Activated T-helper 1 cell treated with anti-CD3 and anti-CD28 coated beads, Interleukin-12 subunit alpha, Interleukin-12 subunit beta, Interleukin-2, Interleukin-4 antibody, amounts not matched to agents 30 ng/mL and 10 ng/mL and 1 ng/mL, durations not matched to agents 14 hours and 24 hours and 36 hours (primary cell): ENCODE measurements at regions of chr1 and their contacts with region 1.

Region 1: DNA sequence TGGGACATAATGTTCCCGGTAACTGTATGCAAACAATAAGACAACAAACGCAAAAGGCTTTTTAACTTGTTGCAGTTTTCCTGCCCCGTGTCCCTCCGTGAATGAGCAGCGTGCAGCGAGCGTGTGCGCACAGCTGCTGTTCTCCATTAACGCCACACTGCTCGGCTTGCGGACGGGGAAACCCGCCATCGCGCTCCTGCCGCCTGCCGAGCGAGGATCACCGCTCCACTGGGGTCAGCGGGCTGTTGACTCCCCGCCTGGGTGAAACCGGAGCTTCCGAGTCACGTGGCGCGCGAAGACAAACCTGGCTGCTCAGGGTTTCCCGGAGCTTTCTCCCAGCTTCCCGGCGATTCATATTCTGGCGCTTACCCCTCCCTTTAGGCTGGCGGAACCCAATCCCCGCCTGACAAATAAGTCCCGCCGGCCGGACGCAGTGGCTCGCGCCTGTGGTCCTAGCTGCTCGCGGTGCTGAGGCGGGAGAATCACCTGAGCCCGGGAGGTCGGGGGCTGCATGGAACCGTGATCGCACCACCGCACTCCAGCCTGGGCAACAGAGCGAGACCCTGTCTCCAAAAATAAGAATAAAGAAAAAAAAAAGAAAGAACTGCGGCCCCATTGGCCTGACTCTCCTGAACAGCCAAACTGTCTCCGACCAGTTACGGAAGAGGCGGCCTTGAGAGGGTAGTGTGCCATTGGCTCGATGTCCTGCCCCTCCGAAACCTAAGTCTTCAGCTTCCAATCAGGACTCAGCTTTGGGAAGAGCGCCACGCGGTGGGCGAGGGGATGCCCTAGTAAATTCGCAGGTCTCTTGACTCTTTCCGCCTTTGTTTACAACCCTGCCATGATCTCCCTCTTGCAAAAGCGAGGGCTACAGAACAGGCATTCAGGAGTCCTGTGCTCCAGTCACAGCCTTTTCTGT is at the start of gene CREB3L4:
- DNase-seq: peak; percentile 80
- H3K4me3 Mint-ChIP-seq: peak within 1 kb of the TSS; percentile 97
- H3K27ac Mint-ChIP-seq: peak within 1 kb of the TSS; percentile 95
- H3K4me1 Mint-ChIP-seq: peaks cover 52% of the 10 kb centered on the region
- H3K27me3 Mint-ChIP-seq: no peaks in the 10 kb centered on the region
- total RNA-seq, gene CREB3L4: 8.1 and 9.8 TPM in 2 replicates

Region 2: DNA sequence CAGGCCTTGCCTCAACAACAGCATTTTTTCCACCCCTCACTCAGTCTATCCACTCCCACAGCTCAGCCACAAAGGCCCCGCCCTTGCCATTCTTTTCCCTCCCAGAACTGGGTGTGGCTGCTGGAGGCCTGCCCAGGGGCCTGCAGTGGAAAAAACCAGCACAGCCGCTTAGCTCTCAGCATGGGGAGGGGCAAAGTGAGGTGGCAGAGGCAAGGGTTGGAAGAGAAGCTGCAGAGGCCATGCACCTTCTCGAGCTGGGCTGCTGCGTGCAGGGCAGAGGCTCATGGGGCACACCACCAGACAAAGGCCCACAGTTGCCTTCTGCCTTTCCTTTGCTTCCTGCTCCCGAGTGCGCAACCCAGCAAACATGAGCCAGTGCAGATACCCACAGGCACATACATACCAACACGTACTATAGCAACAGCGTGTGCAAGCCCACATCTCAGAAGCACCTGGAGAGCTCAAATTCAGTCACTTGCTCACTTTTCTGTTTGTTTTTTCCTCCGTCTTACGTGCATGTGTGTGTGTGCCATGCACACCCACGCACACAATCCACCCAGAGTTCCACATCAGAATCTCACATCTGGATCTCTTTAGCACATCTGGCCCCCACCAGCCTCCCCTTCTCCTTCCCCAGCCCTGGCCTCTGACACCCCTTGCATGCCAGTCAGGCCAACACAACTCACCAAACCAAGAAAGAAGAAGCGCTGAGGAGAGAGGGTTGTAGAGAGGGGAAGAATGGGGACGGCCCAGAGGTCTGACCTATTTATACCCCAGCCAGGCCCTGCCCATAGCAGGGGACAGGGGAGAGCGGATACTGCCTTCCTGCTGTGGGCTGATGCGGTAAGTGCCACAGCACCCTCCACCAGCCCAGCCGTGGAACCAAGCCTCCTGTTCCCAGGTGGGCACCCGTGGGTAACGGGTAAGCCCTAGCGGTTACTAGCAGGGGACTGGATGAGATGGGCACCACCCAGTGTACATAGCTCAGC is 422.0 kb before region 1 on chr1 and contains the start of gene S100A4:
- intact Hi-C with region 1: loop called (anchors 10 kb)
- DNase-seq: peak; percentile 93
- H3K4me3 Mint-ChIP-seq: peak within 1 kb of the TSS; percentile 90
- H3K27ac Mint-ChIP-seq: peak within 1 kb of the TSS; percentile 99
- H3K4me1 Mint-ChIP-seq: peaks cover 83% of the 10 kb centered on the region
- H3K27me3 Mint-ChIP-seq: peaks cover 2% of the 10 kb centered on the region
- total RNA-seq, gene S100A4: 165 and 167 TPM in 2 replicates

Region 3: GRCh38 chr1:153783233-153784190 is 183.8 kb before region 1 on chr1:
- intact Hi-C with region 1: loop called (anchors 1 kb)
- DNase-seq: peak; percentile 90
- H3K4me3 Mint-ChIP-seq: peak overlapping the region; percentile 88
- H3K27ac Mint-ChIP-seq: peak overlapping the region; percentile 92
- H3K4me1 Mint-ChIP-seq: no peaks in the 10 kb centered on the region
- H3K27me3 Mint-ChIP-seq: peaks cover 16% of the 10 kb centered on the region

Region 4: DNA sequence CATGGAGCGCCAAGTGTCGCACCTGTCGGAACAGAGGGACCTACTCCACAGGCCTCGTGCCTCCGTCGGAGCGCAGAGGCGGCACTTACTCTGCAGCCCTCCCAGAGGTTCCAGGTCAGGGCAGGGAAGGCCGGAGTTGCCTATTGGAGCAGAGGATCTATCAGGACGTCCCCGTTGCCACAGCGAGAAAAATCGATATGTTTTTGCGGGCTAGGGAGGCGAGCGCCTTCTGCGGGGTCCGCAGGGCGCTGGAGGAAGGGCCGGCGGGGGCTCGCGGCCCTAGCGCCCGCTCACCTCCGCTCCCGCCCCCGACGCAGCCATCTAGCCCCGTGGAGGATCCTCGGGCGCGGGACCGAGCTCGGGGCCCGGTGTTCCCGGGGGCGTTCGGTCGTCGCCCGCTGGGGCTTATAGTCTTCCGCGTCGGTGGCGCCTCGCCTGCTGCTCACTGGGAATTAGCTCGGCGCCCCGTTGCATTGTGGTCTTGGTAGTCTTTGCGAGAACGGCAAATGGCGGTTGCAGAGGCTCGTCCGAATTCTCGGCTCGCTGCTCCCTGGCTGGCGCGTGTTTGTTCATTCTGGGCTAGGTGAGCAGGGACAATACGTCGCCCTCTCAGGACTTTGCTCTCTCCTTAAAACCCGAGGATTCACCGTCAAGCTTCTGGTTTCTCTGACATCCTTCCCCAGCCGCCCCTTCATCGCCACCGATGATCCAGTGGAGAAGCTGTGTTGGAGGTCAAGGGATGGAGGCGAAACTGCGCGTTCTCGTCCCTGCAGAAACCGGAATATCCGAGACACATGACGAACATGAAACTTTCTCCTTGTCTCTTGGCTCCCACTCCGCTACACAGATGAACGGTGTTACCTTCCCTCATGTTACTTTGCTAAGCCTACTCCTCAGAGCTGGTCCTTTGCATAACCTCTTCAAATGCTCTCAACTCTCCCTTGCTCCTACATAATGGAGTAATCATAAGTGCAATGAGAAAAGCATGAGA is 10.2 kb after region 1 on chr1 and contains the start of gene JTB:
- intact Hi-C with region 1: loop called (anchors 1 kb)
- DNase-seq: peak; percentile 80
- H3K4me3 Mint-ChIP-seq: peak within 1 kb of the TSS; percentile 94
- H3K27ac Mint-ChIP-seq: peak within 1 kb of the TSS; percentile 95
- H3K4me1 Mint-ChIP-seq: peaks cover 33% of the 10 kb centered on the region
- H3K27me3 Mint-ChIP-seq: no peaks in the 10 kb centered on the region
- total RNA-seq, gene JTB: 198 and 213 TPM in 2 replicates

Region 5: DNA sequence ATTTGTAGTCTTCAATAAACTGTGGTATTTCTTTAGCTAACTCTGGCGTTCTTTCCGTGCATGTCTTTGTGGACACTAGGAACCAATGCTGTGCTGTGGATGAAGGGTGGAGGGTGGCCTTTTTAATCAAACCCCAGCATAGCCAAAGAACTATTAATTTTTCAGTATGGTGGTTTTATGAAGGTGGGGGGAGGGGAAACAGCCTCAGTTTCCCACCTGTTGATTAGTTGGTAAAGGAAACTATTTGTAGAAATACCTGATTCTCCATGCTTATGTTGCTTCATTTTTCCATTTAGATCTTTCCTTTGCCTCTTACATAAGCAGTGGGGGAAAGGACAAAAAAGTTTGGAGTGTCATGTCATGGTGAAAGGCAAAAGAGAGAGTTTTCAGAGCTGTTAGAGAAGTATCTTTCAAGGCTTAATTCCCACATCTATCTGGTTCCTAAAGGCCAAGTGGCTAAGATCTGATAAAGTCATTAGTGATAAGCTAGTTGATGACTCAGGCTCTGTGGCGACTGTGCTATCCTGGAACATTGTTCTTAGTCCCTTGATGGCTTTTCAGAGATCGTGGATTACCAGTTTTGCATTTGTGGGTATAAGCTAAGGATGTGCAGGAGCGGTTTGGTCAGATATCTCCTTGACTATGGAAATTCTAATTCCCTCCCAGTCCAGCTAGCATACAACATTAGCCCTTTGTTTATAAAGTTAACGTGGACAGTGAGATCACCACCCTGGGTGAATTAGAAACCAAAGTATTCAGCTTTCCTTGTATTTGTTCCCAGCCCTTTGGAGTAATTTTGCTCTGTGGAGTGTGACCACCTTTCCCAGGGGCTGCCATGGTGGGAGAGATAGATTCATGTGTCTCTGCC is 296.4 kb after region 1 on chr1:
- intact Hi-C with region 1: no loop called
- DNase-seq: no peak
- H3K4me3 Mint-ChIP-seq: no peak overlapping the region
- H3K27ac Mint-ChIP-seq: peak overlapping the region; percentile 81
- H3K4me1 Mint-ChIP-seq: peaks cover 37% of the 10 kb centered on the region
- H3K27me3 Mint-ChIP-seq: no peaks in the 10 kb centered on the region

Region 6: GRCh38 chr1:154493276-154493675 is 525.9 kb after region 1 on chr1:
- intact Hi-C with region 1: no loop called
- DNase-seq: no peak
- H3K4me3 Mint-ChIP-seq: peak overlapping the region; percentile 5
- H3K27ac Mint-ChIP-seq: no peak overlapping the region
- H3K4me1 Mint-ChIP-seq: peaks cover 25% of the 10 kb centered on the region
- H3K27me3 Mint-ChIP-seq: peaks cover 17% of the 10 kb centered on the region